ENCODE measurements at regions of chr9 and their contacts with region 1.

Region 1: GRCh38 chr9:19184144-19184917 is 46.2 kb upstream of the DENND4C start:
- DNase-seq: peak; percentile 72
- H3K4me3 Mint-ChIP-seq: peak overlapping the region; percentile 67
- H3K27ac Mint-ChIP-seq: peak overlapping the region; percentile 89
- H3K4me1 Mint-ChIP-seq: peaks cover 18% of the 10 kb centered on the region
- H3K27me3 Mint-ChIP-seq: no peaks in the 10 kb centered on the region

Region 2: DNA sequence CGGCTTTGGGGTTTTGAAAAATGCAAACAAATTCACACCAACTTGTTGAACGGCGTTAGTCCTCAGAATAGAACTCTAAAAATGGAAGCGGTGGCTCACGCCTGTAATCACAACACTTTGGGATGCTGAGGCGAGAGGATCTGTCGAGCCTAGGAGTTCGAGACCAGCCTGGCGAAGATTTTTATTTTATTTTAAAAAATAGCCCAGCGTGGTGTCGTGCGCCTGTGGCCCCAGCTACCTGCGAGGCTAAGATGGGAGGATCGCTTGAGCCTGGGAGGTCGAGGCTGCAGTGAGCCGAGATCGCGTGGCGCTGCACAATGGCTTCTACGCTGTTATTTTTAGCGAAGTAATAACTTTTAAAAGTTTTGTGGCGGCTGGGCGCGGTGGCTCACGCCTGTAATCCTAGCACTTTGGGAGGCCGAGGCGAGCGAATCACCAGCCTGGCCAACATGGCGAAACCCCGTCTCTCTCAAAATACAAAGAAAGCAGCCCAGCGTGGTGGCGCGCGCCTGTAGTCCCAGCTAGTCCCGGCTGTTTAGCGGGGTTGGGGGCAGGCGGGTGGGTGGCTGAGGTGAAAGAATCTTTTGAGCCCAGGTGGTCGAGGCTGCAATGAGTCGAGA is 56.3 kb before region 1 on chr9:
- intact Hi-C with region 1: loop called (anchors 1 kb)
- DNase-seq: peak; percentile 18
- H3K4me3 Mint-ChIP-seq: peak overlapping the region; percentile 92
- H3K27ac Mint-ChIP-seq: peak overlapping the region; percentile 89
- H3K4me1 Mint-ChIP-seq: peaks cover 53% of the 10 kb centered on the region
- H3K27me3 Mint-ChIP-seq: no peaks in the 10 kb centered on the region

Region 3: DNA sequence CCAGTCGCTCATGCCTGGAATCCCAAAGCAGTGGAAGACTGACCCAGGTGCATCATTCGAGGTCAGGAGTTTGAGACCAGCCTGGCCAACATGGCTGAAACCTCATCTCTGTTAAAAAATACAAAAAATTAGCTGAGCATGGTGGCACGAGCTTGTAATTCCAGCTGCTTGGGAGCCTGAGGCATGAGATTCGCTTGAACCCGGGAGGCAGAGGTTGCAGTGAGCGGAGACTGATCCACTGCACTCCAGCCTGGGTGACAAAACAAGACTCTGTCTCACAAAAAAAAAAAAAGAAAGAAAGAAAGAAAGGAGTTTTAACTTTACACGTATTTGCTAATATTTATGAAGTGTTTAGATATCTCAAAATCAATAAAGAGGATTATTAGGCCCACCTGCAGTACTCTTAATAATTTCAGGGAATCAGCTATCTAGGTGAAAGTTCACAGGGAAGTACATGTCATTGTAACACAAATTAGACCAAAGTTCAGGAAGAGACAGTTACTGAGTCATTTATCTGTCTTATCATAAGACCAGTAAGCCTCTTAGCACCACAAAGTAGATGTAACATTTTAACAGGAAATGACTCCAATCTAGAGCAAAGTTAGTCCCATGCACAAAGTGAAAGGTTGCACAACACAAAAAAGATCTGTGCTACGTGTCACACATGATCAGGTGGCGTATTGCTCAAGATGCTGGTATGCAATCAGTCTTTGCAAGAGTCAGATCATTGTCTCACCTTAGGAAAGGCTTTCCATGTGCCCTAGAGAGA is 22.9 kb before region 1 on chr9:
- intact Hi-C with region 1: loop called (anchors 1 kb)
- DNase-seq: peak; percentile 60
- H3K4me3 Mint-ChIP-seq: peak overlapping the region; percentile 48
- H3K27ac Mint-ChIP-seq: peak overlapping the region; percentile 95
- H3K4me1 Mint-ChIP-seq: peaks cover 19% of the 10 kb centered on the region
- H3K27me3 Mint-ChIP-seq: no peaks in the 10 kb centered on the region

Region 4: GRCh38 chr9:19174127-19174912 is 10.0 kb before region 1 on chr9:
- intact Hi-C with region 1: loop called (anchors 1 kb)
- DNase-seq: peak; percentile 32
- H3K4me3 Mint-ChIP-seq: no peak overlapping the region
- H3K27ac Mint-ChIP-seq: peak overlapping the region; percentile 15
- H3K4me1 Mint-ChIP-seq: peaks cover 22% of the 10 kb centered on the region
- H3K27me3 Mint-ChIP-seq: peaks cover 2% of the 10 kb centered on the region

Region 5: DNA sequence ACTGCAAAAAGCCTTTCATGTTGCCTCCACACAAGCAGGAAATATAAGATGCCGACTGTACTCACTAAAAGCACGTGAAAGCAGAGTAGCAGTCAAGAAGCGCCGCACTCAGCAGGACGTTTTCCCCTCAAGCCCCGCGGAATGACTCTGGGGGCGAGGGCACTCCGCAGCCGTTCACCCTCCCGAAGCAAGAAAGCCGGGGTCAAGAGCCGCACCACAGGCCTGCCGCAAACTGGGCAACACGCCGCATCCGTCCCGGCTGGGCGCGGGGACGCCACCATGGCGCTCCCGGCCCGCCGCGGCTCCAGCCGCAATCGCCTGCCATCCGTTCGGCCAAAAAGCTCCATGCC is 195.3 kb after region 1 on chr9:
- intact Hi-C with region 1: loop called (anchors 1 kb)
- DNase-seq: no peak
- H3K4me3 Mint-ChIP-seq: peak overlapping the region; percentile 98
- H3K27ac Mint-ChIP-seq: peak overlapping the region; percentile 98
- H3K4me1 Mint-ChIP-seq: peaks cover 61% of the 10 kb centered on the region
- H3K27me3 Mint-ChIP-seq: no peaks in the 10 kb centered on the region

Region 6: DNA sequence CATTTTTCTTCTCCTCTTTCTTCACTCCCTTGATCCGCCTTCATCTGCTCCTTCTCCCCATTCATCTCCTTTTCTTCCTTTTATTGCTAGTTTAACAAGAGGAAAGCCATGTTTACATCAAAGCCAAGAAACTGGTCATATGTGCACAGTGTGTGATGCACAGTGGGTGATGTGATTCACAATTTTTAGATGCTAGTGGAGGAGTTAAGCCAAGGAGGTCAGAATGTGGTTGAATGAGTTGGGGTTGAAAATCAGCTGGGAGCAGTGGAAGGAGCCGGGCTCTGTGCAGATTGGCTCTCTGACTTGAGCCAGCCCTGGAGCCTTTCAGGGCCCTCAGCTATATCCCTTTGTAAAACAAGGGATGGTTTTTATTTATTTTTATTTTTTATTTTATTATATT is 231.8 kb after region 1 on chr9:
- intact Hi-C with region 1: no loop called
- DNase-seq: no peak
- H3K4me3 Mint-ChIP-seq: no peak overlapping the region
- H3K27ac Mint-ChIP-seq: no peak overlapping the region
- H3K4me1 Mint-ChIP-seq: no peaks in the 10 kb centered on the region
- H3K27me3 Mint-ChIP-seq: no peaks in the 10 kb centered on the region

Region 7: GRCh38 chr9:19464764-19465585 is 280.6 kb after region 1 on chr9:
- intact Hi-C with region 1: loop called (anchors 2 kb)
- DNase-seq: peak; percentile 64
- H3K4me3 Mint-ChIP-seq: peak overlapping the region; percentile 85
- H3K27ac Mint-ChIP-seq: no peak overlapping the region
- H3K4me1 Mint-ChIP-seq: peaks cover 18% of the 10 kb centered on the region
- H3K27me3 Mint-ChIP-seq: peaks cover 8% of the 10 kb centered on the region